Activated CD4-positive, alpha-beta memory T cell treated with anti-CD3 and anti-CD28 coated beads for 36 hours (primary cell): ENCODE measurements at regions of chr11 and their contacts with region 1.

Region 1: GRCh38 chr11:34438529-34439507 is at the start of gene CAT:
- DNase-seq: peak; percentile 99
- H3K4me3 Mint-ChIP-seq: peak within 1 kb of the TSS; percentile 90
- H3K27ac Mint-ChIP-seq: peak within 1 kb of the TSS; percentile 92
- H3K4me1 Mint-ChIP-seq: peaks cover 19% of the 10 kb centered on the region
- H3K27me3 Mint-ChIP-seq: no peaks in the 10 kb centered on the region
- total RNA-seq, gene CAT: 29.6 to 31.4 TPM

Region 2: DNA sequence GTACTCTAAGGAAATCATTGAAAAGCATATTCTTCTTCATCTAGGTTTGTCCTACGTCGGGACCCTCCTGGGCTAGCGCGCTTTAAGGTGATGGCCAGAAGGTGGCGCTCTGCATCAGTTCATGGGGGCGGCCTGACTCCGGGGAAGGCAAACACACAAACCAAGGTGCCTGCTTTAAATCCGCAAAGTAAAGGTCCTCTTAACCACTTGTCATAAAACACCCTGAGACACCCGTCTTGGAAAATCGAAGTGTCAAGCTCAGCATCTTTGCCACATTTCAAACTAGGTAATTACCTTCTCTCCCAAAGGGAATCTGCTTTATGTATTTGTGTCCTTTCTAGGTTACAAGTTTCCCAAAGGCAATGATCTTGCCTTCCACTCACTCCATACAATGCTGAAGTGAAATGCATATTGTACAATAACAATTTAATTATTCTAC is 580.9 kb before region 1 on chr11:
- CTCF ChIA-PET with region 1: no interaction called
- POLR2A ChIA-PET with region 1: no interaction called
- intact Hi-C with region 1: no loop called
- DNase-seq: peak; percentile 81
- H3K4me3 Mint-ChIP-seq: no peak overlapping the region
- H3K27ac Mint-ChIP-seq: no peak overlapping the region
- H3K4me1 Mint-ChIP-seq: no peaks in the 10 kb centered on the region
- H3K27me3 Mint-ChIP-seq: peaks cover 37% of the 10 kb centered on the region

Region 3: DNA sequence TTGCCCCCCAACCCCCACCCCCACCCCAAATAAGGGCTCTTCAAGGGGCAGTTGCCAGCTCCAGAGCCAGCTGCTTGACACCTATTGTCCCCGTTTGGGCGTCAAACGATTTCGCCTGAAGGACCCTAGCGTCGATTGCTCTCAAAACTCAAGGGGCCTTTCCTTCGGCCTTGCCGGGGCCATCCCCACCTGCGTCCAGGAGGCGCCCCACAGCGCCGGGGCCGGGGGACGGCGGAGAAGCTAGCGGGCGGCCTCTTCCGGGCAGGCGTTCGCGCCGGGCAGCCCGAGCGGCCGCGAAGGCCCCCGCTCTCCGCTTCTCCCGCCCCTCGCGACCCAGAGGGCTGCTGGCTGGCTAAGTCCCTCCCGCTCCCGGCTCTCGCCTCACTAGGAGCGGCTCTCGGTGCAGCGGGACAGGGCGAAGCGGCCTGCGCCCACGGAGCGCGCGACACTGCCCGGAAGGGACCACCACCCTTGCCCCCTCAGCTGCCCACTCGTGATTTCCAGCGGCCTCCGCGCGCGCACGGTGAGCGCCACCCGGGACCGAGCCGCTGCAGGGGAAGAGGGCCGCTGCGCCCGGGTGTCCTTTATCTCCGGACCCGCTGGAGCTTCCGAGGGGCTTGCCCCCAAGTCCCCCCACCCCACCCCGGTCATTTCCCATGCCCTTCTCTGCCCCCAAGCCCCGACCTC is 387.3 kb before region 1 on chr11 and contains the start of gene CAPRIN1:
- CTCF ChIA-PET with region 1: no interaction called
- POLR2A ChIA-PET with region 1: no interaction called
- intact Hi-C with region 1: loop called (anchors 2 kb)
- DNase-seq: peak; percentile 88
- H3K4me3 Mint-ChIP-seq: peak within 1 kb of the TSS; percentile 92
- H3K27ac Mint-ChIP-seq: peak within 1 kb of the TSS; percentile 96
- H3K4me1 Mint-ChIP-seq: peaks cover 18% of the 10 kb centered on the region
- H3K27me3 Mint-ChIP-seq: no peaks in the 10 kb centered on the region
- total RNA-seq, gene CAPRIN1: 261 to 264 TPM

Region 4: GRCh38 chr11:34105079-34105956 is 333.5 kb before region 1 on chr11 and contains the start of gene NAT10:
- CTCF ChIA-PET with region 1: no interaction called
- POLR2A ChIA-PET with region 1: interaction called, 3 read pairs
- intact Hi-C with region 1: loop called (anchors 1 kb)
- DNase-seq: peak; percentile 98
- H3K4me3 Mint-ChIP-seq: peak within 1 kb of the TSS; percentile 95
- H3K27ac Mint-ChIP-seq: peak within 1 kb of the TSS; percentile 98
- H3K4me1 Mint-ChIP-seq: peaks cover 45% of the 10 kb centered on the region
- H3K27me3 Mint-ChIP-seq: peaks cover 4% of the 10 kb centered on the region
- total RNA-seq, gene NAT10: 84.7 to 87.6 TPM

Region 5: GRCh38 chr11:34366522-34366921 is 72.3 kb before region 1 on chr11:
- CTCF ChIA-PET with region 1: interaction called, 4 read pairs
- POLR2A ChIA-PET with region 1: no interaction called
- intact Hi-C with region 1: loop called (anchors 1 kb)
- DNase-seq: peak; percentile 35
- H3K4me3 Mint-ChIP-seq: no peak overlapping the region
- H3K27ac Mint-ChIP-seq: no peak overlapping the region
- H3K4me1 Mint-ChIP-seq: peaks cover 11% of the 10 kb centered on the region
- H3K27me3 Mint-ChIP-seq: peaks cover 24% of the 10 kb centered on the region

Region 6: DNA sequence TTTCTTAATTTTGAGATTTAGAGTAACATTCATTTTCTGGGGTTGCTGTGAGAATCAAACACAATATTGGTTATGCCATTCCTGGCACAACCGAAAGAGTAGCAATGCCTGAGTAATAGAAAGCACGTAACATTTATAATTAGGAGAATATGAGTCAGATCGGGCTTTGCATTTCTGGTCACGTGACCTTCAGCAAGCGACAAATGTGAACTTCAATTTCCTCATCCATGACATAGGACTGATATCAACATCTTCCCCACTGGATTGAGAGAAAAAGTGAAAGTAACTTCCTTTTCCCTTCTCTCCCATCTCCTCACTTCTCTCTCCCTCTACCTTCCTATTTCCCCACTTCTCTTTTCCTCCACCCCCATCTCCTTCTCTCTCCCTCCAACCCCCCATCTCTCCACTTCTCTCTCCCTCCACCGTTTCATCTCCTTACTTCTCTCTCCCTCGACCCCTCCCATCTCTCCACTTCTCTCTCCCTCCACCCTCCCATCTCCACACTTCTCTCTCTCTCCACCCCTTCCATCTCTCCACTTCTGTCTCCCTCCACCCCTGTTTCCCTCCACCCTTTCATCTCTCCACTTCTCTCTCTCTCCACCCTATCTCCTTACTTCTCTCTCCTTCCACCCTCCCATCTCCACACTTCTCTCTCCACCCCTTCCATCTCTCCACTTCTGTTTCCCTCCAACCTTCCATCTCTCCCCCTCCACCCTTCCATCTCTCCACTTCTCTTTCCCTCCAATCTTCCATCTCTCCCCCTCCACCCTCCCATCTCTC is 33.5 kb before region 1 on chr11:
- CTCF ChIA-PET with region 1: no interaction called
- POLR2A ChIA-PET with region 1: no interaction called
- intact Hi-C with region 1: loop called (anchors 2 kb)
- DNase-seq: peak; percentile 32
- H3K4me3 Mint-ChIP-seq: peak overlapping the region; percentile 14
- H3K27ac Mint-ChIP-seq: no peak overlapping the region
- H3K4me1 Mint-ChIP-seq: peaks cover 18% of the 10 kb centered on the region
- H3K27me3 Mint-ChIP-seq: peaks cover 14% of the 10 kb centered on the region

Region 7: GRCh38 chr11:34449013-34449412 is 10.2 kb after region 1 on chr11:
- CTCF ChIA-PET with region 1: no interaction called
- POLR2A ChIA-PET with region 1: interaction called, 10 read pairs
- intact Hi-C with region 1: no loop called
- DNase-seq: peak; percentile 40
- H3K4me3 Mint-ChIP-seq: no peak overlapping the region
- H3K27ac Mint-ChIP-seq: peak overlapping the region; percentile 24
- H3K4me1 Mint-ChIP-seq: peaks cover 22% of the 10 kb centered on the region
- H3K27me3 Mint-ChIP-seq: no peaks in the 10 kb centered on the region

Region 8: DNA sequence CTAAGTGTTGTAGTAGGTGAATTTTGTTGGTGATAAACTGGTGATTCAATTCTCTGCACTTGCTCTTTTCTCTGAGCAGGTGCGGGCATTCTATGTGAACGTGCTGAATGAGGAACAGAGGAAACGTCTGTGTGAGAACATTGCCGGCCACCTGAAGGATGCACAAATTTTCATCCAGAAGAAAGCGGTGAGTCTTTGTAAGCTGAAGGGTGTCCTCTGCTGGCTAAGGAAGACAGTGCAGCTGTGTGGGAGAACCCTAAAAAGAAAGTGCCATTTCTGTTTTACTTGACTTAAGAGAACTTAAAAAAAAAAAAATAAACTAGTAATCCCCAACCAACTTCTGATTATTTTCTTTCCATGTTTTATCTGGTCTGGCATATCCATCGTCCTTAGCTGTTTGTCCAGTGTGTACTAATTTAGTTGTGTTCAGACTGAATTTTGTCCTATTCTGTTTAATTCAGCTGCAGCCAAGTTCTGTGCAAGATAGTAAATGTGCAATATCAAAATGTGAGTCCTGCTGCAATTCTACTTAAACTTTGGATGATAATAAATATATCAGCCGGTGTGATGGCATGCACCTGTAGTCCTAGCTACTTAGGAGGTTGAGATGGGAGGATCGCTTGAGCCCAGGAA is 29.5 kb after region 1 on chr11:
- CTCF ChIA-PET with region 1: interaction called, 12 read pairs
- POLR2A ChIA-PET with region 1: no interaction called
- intact Hi-C with region 1: loop called (anchors 1 kb)
- DNase-seq: peak; percentile 67
- H3K4me3 Mint-ChIP-seq: no peak overlapping the region
- H3K27ac Mint-ChIP-seq: no peak overlapping the region
- H3K4me1 Mint-ChIP-seq: peaks cover 7% of the 10 kb centered on the region
- H3K27me3 Mint-ChIP-seq: no peaks in the 10 kb centered on the region

Region 9: DNA sequence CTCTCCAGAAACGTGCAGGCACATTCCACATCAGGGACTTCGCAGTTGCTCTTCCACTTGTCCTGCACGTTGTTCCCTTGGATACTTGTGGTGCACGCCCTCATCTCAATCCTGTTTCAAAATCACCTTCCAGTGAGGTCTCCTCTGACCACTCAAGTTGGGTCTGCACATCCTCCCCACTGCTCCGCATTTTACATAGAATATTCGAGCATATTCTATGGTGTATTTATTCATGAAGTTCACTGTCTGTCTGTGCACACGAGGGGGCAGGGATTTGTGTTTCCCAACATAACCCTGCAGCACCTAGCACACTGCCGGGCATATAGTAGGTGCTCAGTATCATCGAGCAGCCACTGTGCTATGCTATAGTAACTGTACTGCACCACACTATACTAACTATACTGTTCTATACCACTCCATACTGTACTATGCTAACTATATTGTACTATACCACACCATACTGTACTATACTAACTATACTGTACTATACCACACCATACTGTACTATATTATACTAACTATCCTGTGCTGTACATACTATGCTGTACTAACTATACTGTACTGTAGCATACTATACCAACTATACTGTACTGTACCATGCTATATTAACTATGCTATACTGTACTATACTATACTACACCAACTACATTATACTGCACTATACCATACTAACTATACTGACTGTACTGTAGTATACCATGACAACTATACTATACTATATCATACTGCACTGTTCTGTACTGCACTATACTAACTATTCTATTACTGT is 44.5 kb after region 1 on chr11:
- CTCF ChIA-PET with region 1: no interaction called
- POLR2A ChIA-PET with region 1: no interaction called
- intact Hi-C with region 1: no loop called
- DNase-seq: no peak
- H3K4me3 Mint-ChIP-seq: no peak overlapping the region
- H3K27ac Mint-ChIP-seq: no peak overlapping the region
- H3K4me1 Mint-ChIP-seq: no peaks in the 10 kb centered on the region
- H3K27me3 Mint-ChIP-seq: peaks cover 2% of the 10 kb centered on the region

Region 10: DNA sequence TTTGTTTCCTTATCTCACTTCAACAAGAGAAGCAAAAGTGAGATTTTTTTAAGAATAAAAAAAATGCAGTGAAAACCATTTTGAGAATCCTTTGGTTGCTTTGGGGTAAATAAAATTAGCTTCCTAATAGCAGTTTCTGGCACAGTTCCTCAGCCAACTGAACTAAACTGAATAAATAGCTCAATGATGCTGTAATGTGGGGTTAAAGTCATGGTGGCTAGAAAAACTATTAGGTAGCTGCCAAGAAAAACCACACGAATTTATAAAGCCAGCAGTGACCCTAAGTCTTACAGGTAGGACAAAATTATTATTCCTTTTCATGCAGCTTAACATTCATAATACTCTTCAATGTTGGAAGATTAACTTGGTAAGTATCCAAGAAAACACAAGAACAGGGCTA is 335.0 kb after region 1 on chr11:
- CTCF ChIA-PET with region 1: no interaction called
- POLR2A ChIA-PET with region 1: no interaction called
- intact Hi-C with region 1: no loop called
- DNase-seq: no peak
- H3K4me3 Mint-ChIP-seq: no peak overlapping the region
- H3K27ac Mint-ChIP-seq: no peak overlapping the region
- H3K4me1 Mint-ChIP-seq: no peaks in the 10 kb centered on the region
- H3K27me3 Mint-ChIP-seq: peaks cover 20% of the 10 kb centered on the region